ENCODE measurements at regions of chr10 and their contacts with region 1.

Region 1: DNA sequence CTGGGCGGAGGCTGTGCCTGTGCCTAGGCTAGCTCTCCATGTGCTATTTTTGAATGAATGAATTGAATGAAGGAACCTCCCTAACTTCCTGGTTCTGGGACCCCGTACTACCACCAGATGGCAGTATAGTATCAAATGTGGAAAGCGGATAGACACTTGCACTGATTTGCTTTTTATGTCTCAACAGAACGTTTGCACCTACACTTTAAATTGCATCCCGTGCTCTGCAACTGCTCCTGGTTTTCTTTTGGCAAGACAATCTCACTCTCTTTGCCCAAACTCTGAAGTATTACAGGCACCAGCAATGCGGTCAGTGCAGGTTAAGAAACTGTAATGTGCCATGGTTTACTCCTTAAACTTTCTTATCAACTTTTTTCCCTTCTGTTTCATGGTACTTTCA is 6.5 kb downstream of the FZD8 start:
- DNase-seq: peak in 1 of 2 donors; percentile 76
- ATAC-seq: peak; percentile 69 to 81 (median 79)
- H3K4me3 ChIP-seq: no peak overlapping the region
- H3K4me3 Mint-ChIP-seq: no peak overlapping the region
- H3K27ac ChIP-seq: no peak overlapping the region
- H3K27ac Mint-ChIP-seq: no peak overlapping the region
- H3K4me1 ChIP-seq: peaks cover 12% of the 10 kb centered on the region
- H3K4me1 Mint-ChIP-seq: peaks cover 10 to 15% of the 10 kb centered on the region in 2 donors
- H3K27me3 ChIP-seq: peaks cover 20% of the 10 kb centered on the region
- H3K27me3 Mint-ChIP-seq: peaks cover 40 to 41% of the 10 kb centered on the region in 2 donors
- CTCF ChIP-seq: peak; percentile 89

Region 2: DNA sequence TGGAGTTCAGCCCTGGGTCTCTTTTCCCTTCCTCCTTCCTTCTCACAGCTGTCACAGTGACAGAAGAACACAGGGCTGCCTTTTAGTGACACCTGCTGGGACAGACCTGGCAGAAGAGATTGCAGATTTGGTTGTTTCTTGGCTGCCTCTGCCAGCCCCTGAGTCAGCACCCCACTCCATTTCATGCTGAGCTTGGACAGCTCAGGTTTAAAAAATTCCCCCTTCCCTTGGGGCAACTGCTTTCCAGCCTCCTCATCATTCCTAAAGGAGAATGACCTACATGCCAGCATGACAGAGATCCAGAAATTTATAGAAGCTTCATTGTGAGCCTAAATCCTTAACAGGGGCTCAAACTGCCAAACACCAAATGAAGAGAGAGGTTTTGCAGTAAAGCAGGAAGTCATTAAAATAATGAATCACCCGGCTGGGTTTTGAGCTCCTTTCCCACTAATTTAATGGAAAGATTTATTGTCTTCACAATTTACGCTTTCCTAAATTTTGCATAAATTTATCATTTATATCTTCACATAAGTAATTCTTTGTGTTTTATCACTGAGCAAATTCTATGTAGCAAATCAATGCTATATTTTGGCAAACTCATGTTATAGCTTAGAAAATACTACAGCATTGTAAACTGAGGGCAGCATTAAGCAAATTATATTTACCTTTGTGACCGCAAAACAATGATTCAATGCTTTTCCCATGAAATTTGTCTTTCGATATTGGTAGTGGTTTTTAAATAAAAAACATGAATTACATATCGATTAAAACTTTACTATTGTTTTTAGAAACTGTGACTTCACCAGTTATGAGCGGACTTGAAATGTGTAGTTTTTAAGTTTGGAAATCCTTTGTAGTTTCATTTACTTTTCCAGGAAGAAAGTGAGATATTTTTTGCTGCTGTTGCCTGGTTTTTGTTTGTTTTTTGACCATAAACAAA is 1090.3 kb after region 1 on chr10:
- intact Hi-C with region 1: loop called (anchors 5 kb)
- DNase-seq: no peak
- ATAC-seq: no peak
- H3K4me3 ChIP-seq: no peak overlapping the region
- H3K4me3 Mint-ChIP-seq: no peak overlapping the region
- H3K27ac ChIP-seq: no peak overlapping the region
- H3K27ac Mint-ChIP-seq: no peak overlapping the region
- H3K4me1 ChIP-seq: no peaks in the 10 kb centered on the region
- H3K4me1 Mint-ChIP-seq: no peaks in the 10 kb centered on the region
- H3K27me3 ChIP-seq: no peaks in the 10 kb centered on the region
- H3K27me3 Mint-ChIP-seq: no peaks in the 10 kb centered on the region
- CTCF ChIP-seq: no peak

Region 3: DNA sequence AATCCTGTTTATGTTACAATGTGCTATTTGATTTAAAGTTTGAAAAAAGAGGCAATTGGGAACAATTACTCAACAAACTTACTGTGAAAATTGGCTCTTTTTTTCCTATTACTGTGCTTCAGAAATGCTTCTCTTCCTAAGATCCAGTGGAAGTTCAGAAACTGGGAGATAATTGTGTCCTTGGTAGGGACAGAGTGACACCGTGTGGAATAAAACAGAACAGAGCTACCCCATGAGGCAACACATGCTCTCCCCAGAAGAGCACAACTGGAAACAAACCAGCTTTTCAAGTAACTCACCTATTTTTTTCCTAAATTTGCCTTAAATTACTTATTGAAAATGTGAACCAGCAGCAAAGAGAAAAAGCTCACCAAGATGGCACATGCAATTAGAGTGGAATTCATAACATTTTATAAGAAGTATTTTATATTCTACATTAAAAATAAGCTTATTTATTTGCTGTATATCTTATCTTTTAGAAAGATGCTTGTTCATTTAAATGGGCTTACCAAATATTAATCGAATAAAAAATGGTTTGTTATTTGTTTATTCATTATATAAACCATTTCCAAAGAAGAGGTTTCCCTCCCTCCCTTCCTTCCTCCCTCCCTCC is 1143.8 kb after region 1 on chr10:
- intact Hi-C with region 1: loop called (anchors 1 kb)
- DNase-seq: no peak
- ATAC-seq: peak in 1 of 3 donors; percentile 48
- H3K4me3 ChIP-seq: no peak overlapping the region
- H3K4me3 Mint-ChIP-seq: no peak overlapping the region
- H3K27ac ChIP-seq: no peak overlapping the region
- H3K27ac Mint-ChIP-seq: no peak overlapping the region
- H3K4me1 ChIP-seq: no peaks in the 10 kb centered on the region
- H3K4me1 Mint-ChIP-seq: no peaks in the 10 kb centered on the region
- H3K27me3 ChIP-seq: no peaks in the 10 kb centered on the region
- H3K27me3 Mint-ChIP-seq: no peaks in the 10 kb centered on the region
- CTCF ChIP-seq: no peak

Region 4: GRCh38 chr10:36880898-36881297 is 1245.3 kb after region 1 on chr10:
- intact Hi-C with region 1: loop called (anchors 2 kb)
- DNase-seq: peak in 1 of 2 donors; percentile 5
- ATAC-seq: no peak
- H3K4me3 ChIP-seq: no peak overlapping the region
- H3K4me3 Mint-ChIP-seq: no peak overlapping the region
- H3K27ac ChIP-seq: no peak overlapping the region
- H3K27ac Mint-ChIP-seq: no peak overlapping the region
- H3K4me1 ChIP-seq: no peaks in the 10 kb centered on the region
- H3K4me1 Mint-ChIP-seq: no peaks in the 10 kb centered on the region
- H3K27me3 ChIP-seq: no peaks in the 10 kb centered on the region
- H3K27me3 Mint-ChIP-seq: no peaks in the 10 kb centered on the region
- CTCF ChIP-seq: no peak

Measured in natural killer cell (primary cell).